ENCODE measurements at regions of chr6 and their contacts with region 1.

Region 1: DNA sequence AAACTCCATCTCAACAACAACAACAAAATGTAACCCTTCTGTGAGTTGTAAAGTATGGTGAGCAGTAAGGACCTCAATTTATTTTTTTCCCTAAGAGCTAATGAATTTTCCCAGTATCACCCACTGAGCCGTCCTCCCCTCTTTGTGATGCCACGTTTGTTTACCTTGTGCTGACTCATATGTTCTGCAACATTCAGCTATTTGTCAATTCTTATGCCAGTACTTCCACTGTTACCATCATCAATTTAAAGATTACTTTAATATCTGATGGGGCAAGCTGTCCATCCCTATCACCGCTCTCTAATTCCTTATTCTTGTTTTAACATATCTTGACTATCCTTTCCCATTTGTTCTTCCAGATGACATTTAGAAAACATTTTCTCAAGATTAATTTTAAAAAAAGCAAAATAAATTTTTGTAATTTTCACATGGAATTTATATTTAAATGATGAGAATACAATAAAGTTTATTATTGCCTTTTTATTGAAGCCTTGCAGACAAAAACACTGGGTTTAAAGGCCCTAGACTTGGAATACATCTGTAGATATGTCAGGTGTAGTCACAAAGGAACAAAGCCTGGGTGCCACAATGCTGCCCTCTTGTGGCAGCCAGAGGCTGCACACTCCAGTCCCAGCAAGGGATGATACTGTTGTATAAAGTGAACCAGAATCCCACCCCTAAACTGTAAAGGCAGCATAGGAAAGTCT is 37.4 kb downstream of the MAK start:
- DNase-seq: peak; percentile 31 to 74
- ATAC-seq: peak; percentile 76 to 89 (median 84)
- H3K4me3 ChIP-seq: no peak overlapping the region
- H3K27ac ChIP-seq: no peak overlapping the region
- H3K4me1 ChIP-seq: no peaks in the 10 kb centered on the region
- H3K27me3 ChIP-seq: no peaks in the 10 kb centered on the region
- CTCF ChIP-seq: peak; percentile 97

Region 2: DNA sequence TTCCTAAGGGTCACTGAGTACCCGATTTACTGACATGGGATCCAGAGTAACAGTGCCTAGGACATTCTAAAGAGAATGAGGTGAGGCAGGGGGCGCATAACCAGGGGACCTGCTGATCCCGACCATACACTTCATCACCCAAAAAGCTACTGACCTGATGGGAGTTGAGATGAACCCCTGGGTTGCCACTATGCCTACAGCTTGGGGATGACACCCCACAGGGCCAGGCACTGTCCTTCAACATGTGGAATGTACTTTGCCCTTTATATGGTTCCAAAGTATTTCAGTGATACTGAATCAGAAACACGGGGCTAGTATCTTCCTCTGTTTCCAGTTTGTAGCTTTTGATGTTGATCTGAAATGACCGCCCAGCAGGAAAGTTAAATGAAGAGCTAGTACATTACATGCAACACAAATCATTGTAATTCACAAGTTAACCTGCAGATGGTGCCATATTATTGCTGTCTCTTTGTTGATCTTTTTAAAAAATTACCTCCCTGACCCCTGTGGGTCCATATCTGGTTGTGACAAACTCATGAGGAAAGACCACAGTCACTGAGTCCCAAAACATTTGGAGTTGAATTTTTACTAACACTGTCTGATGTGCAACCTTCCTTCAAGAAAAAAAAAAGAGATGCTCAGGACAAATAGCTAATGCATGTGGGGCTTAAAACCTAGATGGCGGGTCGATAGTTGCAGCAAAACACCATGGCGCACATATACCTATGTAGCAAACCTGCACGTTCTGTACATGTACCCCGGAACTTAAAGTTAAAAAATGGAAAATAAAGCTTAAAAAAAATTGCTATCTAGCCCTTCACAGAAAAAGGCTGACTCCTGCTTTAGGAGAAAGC is 322.6 kb before region 1 on chr6:
- intact Hi-C with region 1: loop called in 1 of 2 experiments (anchors 5 kb)
- DNase-seq: no peak
- ATAC-seq: no peak
- H3K4me3 ChIP-seq: no peak overlapping the region
- H3K27ac ChIP-seq: no peak overlapping the region
- H3K4me1 ChIP-seq: no peaks in the 10 kb centered on the region
- H3K27me3 ChIP-seq: peaks cover 0 to 3% (median 0%) of the 10 kb centered on the region in 3 donors
- CTCF ChIP-seq: peak; percentile 51

Region 3: GRCh38 chr6:10505529-10505928 is 295.5 kb before region 1 on chr6:
- intact Hi-C with region 1: loop called (anchors 2 to 10 kb)
- DNase-seq: no peak
- ATAC-seq: no peak
- H3K4me3 ChIP-seq: no peak overlapping the region
- H3K27ac ChIP-seq: no peak overlapping the region
- H3K4me1 ChIP-seq: no peaks in the 10 kb centered on the region
- H3K27me3 ChIP-seq: no peaks in the 10 kb centered on the region
- CTCF ChIP-seq: no peak

Region 4: DNA sequence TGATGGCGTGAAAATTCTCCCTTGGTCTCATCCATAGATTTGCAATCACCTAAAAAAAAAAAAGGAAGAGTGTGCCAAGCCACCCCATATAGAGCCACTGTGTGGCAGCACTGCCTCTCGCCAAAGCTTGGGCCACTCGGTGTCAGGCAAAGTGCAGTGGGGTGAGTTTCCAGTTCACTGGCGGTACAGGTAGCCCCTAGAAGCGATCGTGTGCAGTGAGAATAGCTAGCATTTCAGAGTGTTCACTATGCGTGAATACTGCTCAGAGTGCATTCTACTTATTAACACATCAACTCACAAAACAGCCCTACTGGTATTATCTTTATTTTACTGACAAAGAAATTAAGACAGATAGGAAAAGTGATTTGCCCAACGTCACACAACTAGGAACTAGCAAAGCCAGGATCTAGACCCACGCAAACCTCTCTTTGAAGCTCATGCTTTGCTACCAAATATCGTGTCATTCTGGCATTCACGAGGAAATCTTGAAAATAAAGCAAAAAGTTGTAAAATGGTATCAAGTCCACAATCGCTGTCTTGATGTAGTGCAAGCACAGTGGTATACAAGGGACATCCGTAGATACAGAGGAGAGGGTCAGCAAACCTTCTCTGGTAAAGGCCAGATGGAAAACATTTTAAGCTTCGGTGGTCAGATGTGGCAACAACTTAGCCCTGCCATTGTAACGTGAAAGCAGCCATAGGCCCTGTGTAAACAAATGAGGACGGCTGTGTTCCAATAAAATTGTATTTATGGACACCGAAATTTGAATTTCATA is 290.2 kb before region 1 on chr6:
- intact Hi-C with region 1: loop called (anchors 2 to 10 kb)
- DNase-seq: peak; percentile 38 to 70
- ATAC-seq: peak; percentile 84 to 91 (median 88)
- H3K4me3 ChIP-seq: peak overlapping the region; percentile 19
- H3K27ac ChIP-seq: peak overlapping the region; percentile 76
- H3K4me1 ChIP-seq: no peaks in the 10 kb centered on the region
- H3K27me3 ChIP-seq: no peaks in the 10 kb centered on the region
- CTCF ChIP-seq: peak; percentile 53